Activated CD4-positive, alpha-beta T cell treated with anti-CD3 and anti-CD28 coated beads, Interleukin-2, amount 10 ng/mL, durations not matched to agents 24 days and 14 days (primary cell): ENCODE measurements at regions of chr7 and their contacts with region 1.

Region 1: DNA sequence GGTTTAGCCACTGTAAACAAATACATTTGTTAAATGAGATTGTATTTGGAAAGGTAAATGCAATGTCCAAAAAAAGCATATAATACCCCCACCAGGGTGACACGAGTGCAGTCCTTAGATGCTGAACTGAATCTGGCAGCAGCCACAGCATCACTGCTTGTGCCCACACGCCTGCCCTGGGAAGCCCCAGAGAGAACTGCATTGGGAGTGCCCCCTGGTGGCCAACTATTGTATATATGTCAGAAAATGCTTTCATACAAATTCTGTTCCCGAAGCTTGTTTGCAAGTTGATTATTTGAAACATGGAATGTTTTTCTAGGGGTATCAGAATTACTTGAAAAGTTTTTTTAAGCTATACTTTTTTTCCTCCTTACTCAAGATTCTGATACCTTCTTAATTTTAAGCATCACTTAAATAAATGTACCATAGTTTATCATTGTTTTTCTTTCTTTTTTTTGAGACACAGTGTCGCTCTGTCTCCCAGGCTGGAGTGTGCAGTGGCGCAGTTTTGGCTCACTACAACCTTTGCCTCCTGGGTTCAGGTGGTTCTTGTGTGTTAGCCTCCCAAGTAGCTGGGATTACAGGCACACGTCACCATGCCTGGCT is 50.1 kb downstream of the LANCL2 start:
- DNase-seq: peak; percentile 93
- H3K4me3 Mint-ChIP-seq: no peak overlapping the region
- H3K27ac Mint-ChIP-seq: no peak overlapping the region
- H3K4me1 Mint-ChIP-seq: peaks cover 2% of the 10 kb centered on the region
- H3K27me3 Mint-ChIP-seq: no peaks in the 10 kb centered on the region

Region 2: DNA sequence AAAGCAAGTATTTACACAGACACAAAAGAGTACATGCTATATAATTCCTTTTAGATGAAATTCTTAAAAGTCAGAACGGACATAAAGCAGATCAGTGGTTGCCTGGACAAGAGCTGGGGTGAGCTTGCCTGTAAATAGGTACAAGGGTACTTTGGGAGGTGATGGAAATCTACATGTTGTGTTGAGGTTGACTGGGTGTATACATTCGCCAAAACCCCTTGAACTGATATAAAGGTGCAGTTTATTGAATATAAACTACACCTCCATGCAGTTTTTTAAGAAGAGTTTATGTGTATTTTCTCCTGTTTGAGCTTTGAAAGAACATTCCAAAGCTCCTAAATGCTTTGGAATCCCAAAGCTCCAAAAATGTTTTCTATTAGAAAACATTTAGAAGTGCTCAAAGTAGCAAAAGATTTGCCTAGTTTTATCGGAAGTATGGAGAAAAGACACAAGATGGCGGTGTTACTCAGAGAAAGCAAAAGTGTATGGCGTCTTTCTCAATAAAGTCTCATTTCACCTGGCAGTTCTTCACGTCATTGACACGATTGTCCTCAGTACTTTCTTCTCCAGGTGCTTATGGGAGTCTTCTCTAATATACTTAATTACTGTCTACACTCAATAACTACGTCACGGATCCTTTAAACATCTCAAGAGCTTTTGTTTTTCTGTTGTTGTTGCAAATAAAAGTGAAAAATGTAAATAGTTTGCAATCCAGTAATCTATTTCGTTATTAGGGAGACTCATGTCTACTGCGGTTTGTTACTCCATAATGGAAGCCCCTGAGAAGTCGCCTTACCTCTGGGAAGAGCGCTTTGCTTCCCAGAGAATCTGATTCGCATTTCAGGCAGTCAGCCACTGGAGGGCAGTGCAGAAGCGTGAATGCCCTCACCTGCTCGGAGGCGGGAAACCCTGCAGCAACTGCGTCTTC is 641.5 kb before region 1 on chr7:
- intact Hi-C with region 1: loop called (anchors 1 kb)
- DNase-seq: peak; percentile 91
- H3K4me3 Mint-ChIP-seq: peak overlapping the region; percentile 79
- H3K27ac Mint-ChIP-seq: no peak overlapping the region
- H3K4me1 Mint-ChIP-seq: peaks cover 9% of the 10 kb centered on the region
- H3K27me3 Mint-ChIP-seq: peaks cover 39% of the 10 kb centered on the region

Region 3: DNA sequence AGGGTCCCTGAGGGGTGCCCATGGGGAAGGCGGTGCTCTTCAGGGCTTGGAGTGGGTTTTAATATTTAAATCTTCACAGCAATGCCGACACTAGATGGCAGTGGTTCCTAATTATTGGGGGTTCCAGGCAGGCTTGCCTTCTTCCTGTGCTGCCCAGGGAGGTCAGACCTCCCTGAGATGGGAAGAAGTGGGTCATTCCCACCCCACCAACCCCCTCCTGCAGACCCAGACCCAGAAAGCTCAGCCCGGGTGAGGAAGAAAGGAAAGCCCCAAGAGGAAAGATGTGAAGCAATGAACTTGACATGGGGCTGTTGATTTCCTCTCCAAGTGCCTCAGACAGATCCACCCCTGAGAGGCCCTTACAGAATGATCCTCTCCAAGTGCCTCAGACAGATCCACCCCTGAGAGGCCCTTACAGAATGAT is 135.2 kb before region 1 on chr7:
- intact Hi-C with region 1: loop called (anchors 1 kb)
- DNase-seq: peak; percentile 89
- H3K4me3 Mint-ChIP-seq: no peak overlapping the region
- H3K27ac Mint-ChIP-seq: peak overlapping the region; percentile 29
- H3K4me1 Mint-ChIP-seq: peaks cover 2% of the 10 kb centered on the region
- H3K27me3 Mint-ChIP-seq: peaks cover 1% of the 10 kb centered on the region

Region 4: DNA sequence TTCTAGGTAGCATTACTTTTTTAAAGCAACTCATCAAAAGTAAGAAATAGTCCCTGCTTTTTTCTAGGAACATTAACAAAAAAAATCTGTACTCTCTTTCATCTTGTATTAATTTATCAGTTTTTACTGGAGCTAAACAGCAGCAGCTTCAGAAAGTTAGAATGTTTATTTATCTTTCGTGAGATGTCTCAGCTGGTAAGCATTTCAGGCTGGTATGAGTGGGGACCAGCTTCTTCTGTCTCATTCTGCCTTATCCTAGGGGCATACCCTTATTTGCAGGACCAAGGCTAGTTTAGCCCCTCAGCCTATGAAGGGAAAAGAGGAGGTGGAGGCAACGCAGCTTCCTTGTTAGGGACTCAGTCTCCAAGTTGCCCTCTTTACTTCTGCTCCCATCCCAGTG is 15.1 kb before region 1 on chr7:
- intact Hi-C with region 1: no loop called
- DNase-seq: no peak
- H3K4me3 Mint-ChIP-seq: no peak overlapping the region
- H3K27ac Mint-ChIP-seq: no peak overlapping the region
- H3K4me1 Mint-ChIP-seq: peaks cover 2% of the 10 kb centered on the region
- H3K27me3 Mint-ChIP-seq: no peaks in the 10 kb centered on the region